ENCODE measurements at regions of chr17 and their contacts with region 1.

Region 1: DNA sequence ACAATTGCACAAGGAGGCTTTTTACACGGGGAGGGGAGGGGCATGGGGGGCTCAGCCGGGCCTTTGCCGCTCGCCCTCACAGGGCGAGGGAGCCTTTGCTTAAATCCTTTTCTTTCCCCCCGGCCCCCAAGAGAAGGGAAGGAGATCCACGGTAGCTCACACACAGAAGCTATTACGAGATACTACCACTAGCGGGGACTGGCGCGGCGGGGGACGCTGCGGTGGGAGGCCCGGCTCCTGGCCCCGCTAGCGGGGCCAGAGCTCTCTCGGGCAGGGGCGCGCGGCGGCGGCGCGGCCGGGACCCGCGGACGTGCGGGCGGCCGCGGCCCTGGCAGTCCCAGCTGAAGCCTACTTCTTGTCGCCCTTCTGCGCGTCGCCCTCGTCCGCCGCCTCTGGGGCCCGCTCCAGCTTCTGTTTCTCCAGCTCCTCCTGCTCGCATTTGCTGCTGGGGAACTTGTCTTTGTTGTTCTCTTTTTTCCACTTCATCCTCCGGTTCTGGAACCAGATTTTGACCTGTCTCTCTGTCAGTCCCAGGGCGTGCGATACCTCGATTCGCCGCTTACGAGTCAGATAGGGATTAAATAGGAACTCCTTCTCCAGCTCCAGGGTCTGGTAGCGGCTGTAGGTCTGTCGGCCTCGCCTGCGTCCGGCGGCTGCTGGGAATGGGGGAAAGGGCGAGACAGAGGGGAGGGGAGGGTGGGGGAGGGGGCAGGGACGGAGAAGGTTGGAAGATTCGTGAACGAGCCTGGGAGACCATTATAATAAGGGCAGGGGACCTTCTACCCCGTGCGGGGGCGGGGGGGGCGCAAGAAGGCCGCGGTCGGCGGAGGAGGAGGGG is 2.0 kb downstream of the HOXB8 start:
- DNase-seq: no peak
- ATAC-seq: peak; percentile 67
- H3K4me3 ChIP-seq: peak overlapping the region; percentile 86
- H3K27ac ChIP-seq: no peak overlapping the region
- H3K4me1 ChIP-seq: peaks cover 11% of the 10 kb centered on the region
- H3K27me3 ChIP-seq: peaks cover 21 to 24% of the 10 kb centered on the region in 2 experiments
- CTCF ChIP-seq: peak; percentile 21 to 33 (median 22); a peak in 4 of 6 replicates
- EP300 ChIP-seq: no peak
- POLR2A ChIP-seq: no peak
- RAD21 ChIP-seq: no peak

Region 2: GRCh38 chr17:47675380-47676198 is 937.5 kb before region 1 on chr17:
- CTCF ChIA-PET with region 1: no interaction called
- POLR2A ChIA-PET with region 1: interaction called, 12 read pairs
- RAD21 ChIA-PET with region 1: no interaction called
- SMC1A ChIA-PET with region 1: no interaction called
- in situ Hi-C with region 1: no loop called
- intact Hi-C with region 1: no loop called
- DNase-seq: no peak
- ATAC-seq: no peak
- H3K4me3 ChIP-seq: no peak overlapping the region
- H3K27ac ChIP-seq: no peak overlapping the region
- H3K4me1 ChIP-seq: no peaks in the 10 kb centered on the region
- H3K27me3 ChIP-seq: no peaks in the 10 kb centered on the region
- CTCF ChIP-seq: no peak
- EP300 ChIP-seq: no peak
- POLR2A ChIP-seq: no peak; the same call in 1 of the 2 replicates
- RAD21 ChIP-seq: no peak

Region 3: DNA sequence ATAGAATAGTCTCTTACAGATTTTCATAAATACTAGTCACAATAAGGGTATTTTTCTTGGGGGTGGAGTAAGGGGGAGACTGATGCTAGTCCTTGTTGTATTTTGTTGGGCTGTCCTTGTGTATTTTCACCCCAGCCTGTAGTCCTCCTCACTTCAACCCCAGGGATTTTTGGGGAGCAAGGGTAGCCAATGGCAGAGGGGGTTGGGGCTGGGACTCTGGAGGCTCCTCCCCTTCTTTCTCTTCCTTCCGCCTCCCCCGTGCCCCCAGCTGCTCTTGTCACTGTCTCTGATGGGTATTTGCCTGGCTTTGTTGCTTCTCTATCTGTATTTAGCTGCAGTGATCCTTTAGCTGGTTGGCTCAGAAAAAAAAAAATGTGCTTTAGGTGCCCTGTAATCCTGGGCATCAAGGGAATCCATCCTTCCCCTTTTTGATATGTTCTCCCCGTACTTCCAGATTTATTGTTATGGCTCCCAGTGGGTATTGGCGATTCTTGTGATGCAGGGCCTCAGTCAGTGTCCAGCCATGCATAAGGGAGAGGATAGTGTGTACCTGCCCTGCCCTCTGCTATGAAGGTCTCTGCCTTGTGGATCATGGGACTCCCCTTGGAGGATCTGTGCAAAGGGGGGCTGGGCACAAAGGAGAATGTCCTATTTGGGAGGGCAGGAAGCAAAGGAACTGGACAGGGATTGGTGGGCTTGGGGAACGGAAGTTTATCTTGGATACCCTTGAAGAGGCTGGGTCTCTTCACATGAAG is 315.1 kb after region 1 on chr17:
- CTCF ChIA-PET with region 1: no interaction called
- POLR2A ChIA-PET with region 1: no interaction called
- RAD21 ChIA-PET with region 1: no interaction called
- SMC1A ChIA-PET with region 1: no interaction called
- in situ Hi-C with region 1: no loop called
- intact Hi-C with region 1: no loop called
- DNase-seq: no peak
- ATAC-seq: no peak
- H3K4me3 ChIP-seq: no peak overlapping the region
- H3K27ac ChIP-seq: no peak overlapping the region
- H3K4me1 ChIP-seq: no peaks in the 10 kb centered on the region
- H3K27me3 ChIP-seq: no peaks in the 10 kb centered on the region
- CTCF ChIP-seq: no peak
- EP300 ChIP-seq: no peak
- POLR2A ChIP-seq: peak; percentile 59
- RAD21 ChIP-seq: no peak